AG04450 (cell line): ENCODE measurements at regions of chr16 and their contacts with region 1.

Region 1: GRCh38 chr16:87765776-87766484 is at the start of gene KLHDC4:
- DNase-seq: peak; percentile 58
- H3K4me3 ChIP-seq: peak within 1 kb of the TSS; percentile 83
- H3K27ac ChIP-seq: peak within 1 kb of the TSS; percentile 86
- H3K27me3 ChIP-seq: no peaks in the 10 kb centered on the region
- CTCF ChIP-seq: no peak
- polyA plus RNA-seq, gene KLHDC4: 9.9 and 11.5 TPM in 2 replicates

Region 2: GRCh38 chr16:86575754-86576557 is 1190.0 kb before region 1 on chr16:
- CTCF ChIA-PET with region 1: no interaction called
- POLR2A ChIA-PET with region 1: no interaction called
- DNase-seq: peak; percentile 95
- H3K4me3 ChIP-seq: peak overlapping the region; percentile 76
- H3K27ac ChIP-seq: peak overlapping the region; percentile 100
- H3K27me3 ChIP-seq: no peaks in the 10 kb centered on the region
- CTCF ChIP-seq: peak; percentile 86

Region 3: GRCh38 chr16:87581833-87582203 is 184.1 kb before region 1 on chr16:
- CTCF ChIA-PET with region 1: interaction called, 42 read pairs
- POLR2A ChIA-PET with region 1: interaction called, 5 read pairs
- DNase-seq: peak; percentile 95
- H3K4me3 ChIP-seq: peak overlapping the region; percentile 32; the same call in 1 of the 2 replicates
- H3K27ac ChIP-seq: peak overlapping the region; percentile 99
- H3K27me3 ChIP-seq: no peaks in the 10 kb centered on the region
- CTCF ChIP-seq: no peak

Region 4: DNA sequence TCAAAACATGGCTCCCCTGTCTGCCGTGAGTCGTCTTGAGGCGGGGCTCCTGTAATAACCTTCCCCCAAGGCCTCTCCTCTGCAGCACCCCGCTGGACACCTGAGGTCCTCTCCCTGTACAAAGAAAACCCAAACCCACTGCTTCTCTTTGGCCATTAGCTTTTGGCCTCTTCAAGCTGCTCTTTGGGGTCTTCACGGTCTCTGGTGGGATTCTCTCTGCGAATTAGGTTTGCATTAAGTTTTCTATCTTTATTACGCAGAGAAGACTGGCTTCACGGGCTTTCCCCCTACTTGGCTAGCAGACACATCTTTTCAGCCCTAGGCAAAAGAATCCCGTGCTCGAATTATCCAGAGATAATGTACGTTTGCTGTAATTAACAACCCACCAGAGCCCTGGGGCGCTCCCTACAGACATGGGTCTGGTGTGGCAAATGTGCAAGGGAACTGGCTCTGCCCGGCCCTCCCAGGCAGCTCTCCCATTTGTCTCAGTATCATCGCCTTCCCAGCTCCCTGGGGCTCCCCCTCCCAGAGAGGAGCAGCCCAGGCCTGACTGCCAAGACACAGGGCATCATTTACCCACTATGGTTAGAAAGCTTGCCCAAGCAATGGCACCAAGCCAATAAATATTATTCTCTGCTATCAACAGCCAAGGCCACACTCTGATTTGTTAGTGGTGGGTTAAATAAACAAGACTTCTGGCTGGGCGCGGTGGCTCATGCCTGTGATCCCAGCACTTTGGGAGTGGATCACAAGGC is 24.5 kb after region 1 on chr16:
- CTCF ChIA-PET with region 1: interaction called, 3 read pairs
- POLR2A ChIA-PET with region 1: interaction called, 12 read pairs
- DNase-seq: no peak
- H3K4me3 ChIP-seq: no peak overlapping the region
- H3K27ac ChIP-seq: peak overlapping the region; percentile 82
- H3K27me3 ChIP-seq: no peaks in the 10 kb centered on the region
- CTCF ChIP-seq: no peak

Region 5: GRCh38 chr16:87874639-87875465 is 108.9 kb after region 1 on chr16:
- CTCF ChIA-PET with region 1: interaction called, 27 read pairs
- POLR2A ChIA-PET with region 1: interaction called, 4 read pairs
- DNase-seq: no peak
- H3K4me3 ChIP-seq: no peak overlapping the region
- H3K27ac ChIP-seq: no peak overlapping the region
- H3K27me3 ChIP-seq: peaks cover 7% of the 10 kb centered on the region
- CTCF ChIP-seq: no peak